A673 (cell line): ENCODE measurements at regions of chr2 and their contacts with region 1.

Region 1: GRCh38 chr2:40244675-40245074 is 207.2 kb downstream of the SLC8A1 start:
- DNase-seq: peak; percentile 53
- H3K4me3 ChIP-seq: no peak overlapping the region
- H3K27ac ChIP-seq: no peak overlapping the region
- H3K4me1 ChIP-seq: no peaks in the 10 kb centered on the region
- H3K27me3 ChIP-seq: peaks cover 12% of the 10 kb centered on the region
- CTCF ChIP-seq: peak; percentile 59

Region 2: DNA sequence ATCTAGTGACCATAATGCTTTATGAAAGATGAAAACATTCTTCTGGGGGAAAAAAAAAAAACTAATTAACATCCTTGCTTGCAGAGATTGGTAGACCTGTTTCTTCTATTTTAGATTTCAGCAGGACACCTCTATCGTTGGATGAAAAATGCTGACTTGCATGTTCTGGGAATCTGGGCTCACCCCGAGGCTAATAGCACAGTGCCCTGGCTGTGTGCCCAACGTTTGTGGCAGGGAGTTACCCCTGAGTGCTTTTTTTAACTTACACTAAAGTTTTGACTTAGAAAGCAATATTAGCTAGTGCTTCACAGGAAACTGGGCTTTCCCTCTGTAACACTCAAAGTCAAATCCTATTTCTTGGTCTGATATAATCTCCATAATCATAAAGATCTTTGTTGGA is 26.0 kb before region 1 on chr2:
- CTCF ChIA-PET with region 1: no interaction called
- POLR2A ChIA-PET with region 1: no interaction called
- intact Hi-C with region 1: loop called (anchors 2 kb)
- DNase-seq: no peak
- H3K4me3 ChIP-seq: no peak overlapping the region
- H3K27ac ChIP-seq: no peak overlapping the region
- H3K4me1 ChIP-seq: no peaks in the 10 kb centered on the region
- H3K27me3 ChIP-seq: no peaks in the 10 kb centered on the region
- CTCF ChIP-seq: no peak

Region 3: GRCh38 chr2:40230707-40231432 is 13.8 kb before region 1 on chr2:
- CTCF ChIA-PET with region 1: no interaction called
- POLR2A ChIA-PET with region 1: no interaction called
- intact Hi-C with region 1: no loop called
- DNase-seq: no peak
- H3K4me3 ChIP-seq: no peak overlapping the region
- H3K27ac ChIP-seq: no peak overlapping the region
- H3K4me1 ChIP-seq: no peaks in the 10 kb centered on the region
- H3K27me3 ChIP-seq: peaks cover 3% of the 10 kb centered on the region
- CTCF ChIP-seq: no peak

Region 4: DNA sequence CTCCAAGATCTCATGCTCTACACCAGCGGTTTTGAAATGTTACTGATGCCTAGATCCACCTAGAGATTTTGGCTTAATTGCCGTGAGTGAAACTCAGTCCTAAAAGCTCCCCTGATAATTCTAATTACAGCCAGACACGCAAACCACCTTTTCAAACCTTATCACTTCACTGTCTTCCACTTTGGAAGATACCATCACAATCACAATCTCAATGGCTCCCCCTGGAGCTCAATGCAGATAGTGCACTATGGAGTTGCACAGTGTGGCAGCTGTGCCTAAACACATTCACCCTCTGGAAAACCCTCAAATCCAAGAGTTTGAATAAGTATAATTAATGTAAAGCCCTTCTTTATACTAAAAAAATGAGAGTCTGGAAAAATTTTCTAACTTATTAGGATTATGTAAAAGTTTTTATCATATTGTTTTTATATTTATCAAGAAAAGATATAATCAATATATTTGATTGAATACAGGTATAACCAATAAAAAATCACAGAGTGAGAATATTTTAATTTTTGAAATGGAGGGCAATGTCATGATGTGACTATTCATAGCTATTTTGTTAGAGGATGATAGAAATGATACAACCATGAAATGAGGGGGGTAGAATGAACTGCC is 310.1 kb after region 1 on chr2:
- CTCF ChIA-PET with region 1: no interaction called
- POLR2A ChIA-PET with region 1: no interaction called
- intact Hi-C with region 1: loop called (anchors 10 kb)
- DNase-seq: peak; percentile 63
- H3K4me3 ChIP-seq: no peak overlapping the region
- H3K27ac ChIP-seq: no peak overlapping the region
- H3K4me1 ChIP-seq: no peaks in the 10 kb centered on the region
- H3K27me3 ChIP-seq: peaks cover 31% of the 10 kb centered on the region
- CTCF ChIP-seq: peak; percentile 84